Activated CD4-positive, alpha-beta T cell treated with anti-CD3 and anti-CD28 coated beads for 36 hours (primary cell): ENCODE measurements at regions of chr9 and their contacts with region 1.

Region 1: GRCh38 chr9:125261501-125262293 is at the start of gene GAPVD1:
- DNase-seq: peak; percentile 94
- ATAC-seq: peak; percentile 99
- H3K4me3 Mint-ChIP-seq: peak within 1 kb of the TSS; percentile 99
- H3K27ac Mint-ChIP-seq: peak within 1 kb of the TSS; percentile 96
- H3K4me1 Mint-ChIP-seq: peaks cover 43% of the 10 kb centered on the region
- H3K27me3 Mint-ChIP-seq: no peaks in the 10 kb centered on the region
- total RNA-seq, gene GAPVD1: 41.6 to 47.7 TPM

Region 2: GRCh38 chr9:123589361-123590239 is 1672.1 kb before region 1 on chr9:
- CTCF ChIA-PET with region 1: no interaction called
- POLR2A ChIA-PET with region 1: no interaction called
- intact Hi-C with region 1: no loop called
- DNase-seq: no peak
- ATAC-seq: no peak
- H3K4me3 Mint-ChIP-seq: no peak overlapping the region
- H3K27ac Mint-ChIP-seq: no peak overlapping the region
- H3K4me1 Mint-ChIP-seq: no peaks in the 10 kb centered on the region
- H3K27me3 Mint-ChIP-seq: no peaks in the 10 kb centered on the region

Region 3: GRCh38 chr9:124940693-124941453 is 320.8 kb before region 1 on chr9 and contains the start of gene GOLGA1:
- CTCF ChIA-PET with region 1: no interaction called
- POLR2A ChIA-PET with region 1: no interaction called
- intact Hi-C with region 1: loop called in 1 of 2 experiments (anchors 1 kb)
- DNase-seq: peak; percentile 96
- ATAC-seq: peak; percentile 89
- H3K4me3 Mint-ChIP-seq: peak within 1 kb of the TSS; percentile 93
- H3K27ac Mint-ChIP-seq: peak within 1 kb of the TSS; percentile 99
- H3K4me1 Mint-ChIP-seq: peaks cover 20% of the 10 kb centered on the region
- H3K27me3 Mint-ChIP-seq: no peaks in the 10 kb centered on the region
- total RNA-seq, gene GOLGA1: 17.4 to 18.3 TPM

Region 4: GRCh38 chr9:125008599-125008998 is 253.1 kb before region 1 on chr9:
- CTCF ChIA-PET with region 1: no interaction called
- POLR2A ChIA-PET with region 1: no interaction called
- intact Hi-C with region 1: no loop called
- DNase-seq: no peak
- ATAC-seq: no peak
- H3K4me3 Mint-ChIP-seq: no peak overlapping the region
- H3K27ac Mint-ChIP-seq: no peak overlapping the region
- H3K4me1 Mint-ChIP-seq: no peaks in the 10 kb centered on the region
- H3K27me3 Mint-ChIP-seq: no peaks in the 10 kb centered on the region

Region 5: DNA sequence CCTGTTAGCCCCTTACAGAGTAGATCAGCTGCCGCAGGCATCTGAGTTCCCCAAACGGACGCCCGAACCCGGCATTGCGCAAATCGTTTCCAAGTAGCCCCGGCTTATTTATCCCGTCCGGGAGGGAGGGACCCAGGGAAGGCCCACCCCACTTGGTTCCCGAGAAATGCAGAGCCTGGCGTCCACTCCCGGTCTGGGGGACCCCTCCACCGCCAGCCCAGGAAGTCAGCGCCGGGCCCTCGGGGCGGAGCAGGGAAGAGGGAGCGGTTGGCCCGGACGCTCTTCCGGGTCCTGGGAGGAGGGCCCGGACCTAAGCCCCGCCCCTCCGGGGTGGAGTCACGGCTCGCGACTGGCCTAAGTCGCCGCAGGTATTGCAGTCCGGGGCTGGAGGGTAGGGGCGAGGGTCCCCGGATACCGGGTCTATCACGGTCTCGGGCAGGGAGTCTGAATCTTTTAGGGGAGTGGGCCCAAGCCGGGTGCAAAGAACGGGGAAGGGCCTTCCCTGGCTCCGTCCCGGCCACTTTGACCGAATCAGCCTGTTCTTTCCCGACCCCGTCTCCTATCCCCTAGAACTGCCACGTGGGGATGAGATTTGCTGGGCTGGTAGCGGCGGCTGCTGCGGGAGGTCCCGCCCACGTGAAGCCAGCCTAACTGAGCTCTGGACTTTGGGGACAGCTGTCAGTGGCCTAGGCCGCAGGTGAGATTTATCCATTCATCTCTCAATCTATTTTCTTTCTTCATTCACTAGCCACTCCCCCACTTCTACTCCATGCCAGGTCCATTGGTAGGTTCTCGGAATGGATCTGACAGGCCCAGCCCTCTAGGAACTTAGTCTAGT is 61.3 kb before region 1 on chr9 and contains the start of gene RABEPK:
- CTCF ChIA-PET with region 1: no interaction called
- POLR2A ChIA-PET with region 1: no interaction called
- intact Hi-C with region 1: loop called in 1 of 2 experiments (anchors 1 kb)
- DNase-seq: peak; percentile 95
- ATAC-seq: peak; percentile 98
- H3K4me3 Mint-ChIP-seq: peak within 1 kb of the TSS; percentile 83
- H3K27ac Mint-ChIP-seq: peak within 1 kb of the TSS; percentile 80
- H3K4me1 Mint-ChIP-seq: peaks cover 30% of the 10 kb centered on the region
- H3K27me3 Mint-ChIP-seq: no peaks in the 10 kb centered on the region
- total RNA-seq, gene RABEPK: 29.1 to 33.1 TPM

Region 6: GRCh38 chr9:125332527-125332926 is 70.8 kb after region 1 on chr9:
- CTCF ChIA-PET with region 1: no interaction called
- POLR2A ChIA-PET with region 1: no interaction called
- intact Hi-C with region 1: loop called in 1 of 2 experiments (anchors 1 kb)
- DNase-seq: peak; percentile 68
- ATAC-seq: peak; percentile 95
- H3K4me3 Mint-ChIP-seq: no peak overlapping the region
- H3K27ac Mint-ChIP-seq: peak overlapping the region; percentile 51
- H3K4me1 Mint-ChIP-seq: peaks cover 16% of the 10 kb centered on the region
- H3K27me3 Mint-ChIP-seq: no peaks in the 10 kb centered on the region

Region 7: GRCh38 chr9:126301985-126302603 is 1040.4 kb after region 1 on chr9:
- CTCF ChIA-PET with region 1: no interaction called
- POLR2A ChIA-PET with region 1: no interaction called
- intact Hi-C with region 1: no loop called
- DNase-seq: peak; percentile 69
- ATAC-seq: peak; percentile 65
- H3K4me3 Mint-ChIP-seq: no peak overlapping the region
- H3K27ac Mint-ChIP-seq: no peak overlapping the region
- H3K4me1 Mint-ChIP-seq: peaks cover 2% of the 10 kb centered on the region
- H3K27me3 Mint-ChIP-seq: no peaks in the 10 kb centered on the region